Panc1 (cell line): ENCODE measurements at regions of chr6 and their contacts with region 1.

Region 1: GRCh38 chr6:47512872-47513271 is 35.3 kb downstream of the CD2AP start:
- DNase-seq: no peak
- ATAC-seq: no peak
- H3K4me3 ChIP-seq: no peak overlapping the region
- H3K27ac ChIP-seq: no peak overlapping the region
- H3K4me1 ChIP-seq: no peaks in the 10 kb centered on the region
- H3K27me3 ChIP-seq: no peaks in the 10 kb centered on the region
- CTCF ChIP-seq: no peak

Region 2: GRCh38 chr6:47571488-47571887 is 58.6 kb after region 1 on chr6:
- CTCF ChIA-PET with region 1: no interaction called
- POLR2A ChIA-PET with region 1: interaction called, 12 read pairs
- in situ Hi-C with region 1: no loop called
- intact Hi-C with region 1: no loop called
- DNase-seq: no peak
- ATAC-seq: no peak
- H3K4me3 ChIP-seq: no peak overlapping the region
- H3K27ac ChIP-seq: no peak overlapping the region
- H3K4me1 ChIP-seq: no peaks in the 10 kb centered on the region
- H3K27me3 ChIP-seq: no peaks in the 10 kb centered on the region
- CTCF ChIP-seq: no peak